ENCODE measurements at regions of chr11 and their contacts with region 1.

Region 1: DNA sequence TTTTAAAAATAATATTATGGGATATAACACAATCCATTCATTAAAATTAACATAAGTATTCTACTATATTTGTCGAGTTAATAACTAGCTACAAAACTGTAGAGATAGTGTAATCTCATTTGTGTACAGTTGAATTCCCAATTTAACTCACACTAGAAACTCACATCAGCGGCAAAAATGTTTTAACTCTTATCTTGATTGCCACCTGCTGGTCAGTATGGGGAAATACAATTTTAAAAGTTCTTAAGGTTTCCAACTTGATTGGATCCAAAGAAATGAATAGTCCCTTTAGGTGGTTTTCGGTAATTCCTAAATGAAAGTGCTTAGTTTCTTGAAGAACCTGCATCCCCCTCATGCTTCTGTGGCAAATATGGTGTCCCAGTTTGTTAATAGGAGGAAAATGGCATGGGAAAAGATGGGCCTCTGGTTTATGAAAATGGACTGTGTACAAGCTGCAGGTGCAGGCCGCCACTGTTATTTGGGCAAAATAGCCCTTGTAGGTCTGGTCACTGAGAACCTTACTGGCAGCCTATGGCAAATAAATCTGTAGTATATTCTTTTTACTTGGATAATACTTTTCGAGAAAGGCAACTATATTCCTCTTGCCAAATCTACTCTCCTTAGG is 33.7 kb upstream of the SLC17A6 start:
- DNase-seq: no peak
- ATAC-seq: peak in 3 of 4 donors; percentile 30 to 67 (median 36)
- H3K4me3 ChIP-seq: no peak overlapping the region
- H3K27ac ChIP-seq: no peak overlapping the region
- H3K4me1 ChIP-seq: no peaks in the 10 kb centered on the region
- H3K27me3 ChIP-seq: peaks cover 0 to 3% (median 0%) of the 10 kb centered on the region in 3 donors
- CTCF ChIP-seq: peak; percentile 61

Region 2: GRCh38 chr11:20647976-20648565 is 1656.4 kb before region 1 on chr11:
- intact Hi-C with region 1: loop called (anchors 5 to 10 kb)
- DNase-seq: no peak
- ATAC-seq: peak in 3 of 4 donors; percentile 51 to 67 (median 57)
- H3K4me3 ChIP-seq: no peak overlapping the region
- H3K27ac ChIP-seq: no peak overlapping the region
- H3K4me1 ChIP-seq: no peaks in the 10 kb centered on the region
- H3K27me3 ChIP-seq: peaks cover 0 to 3% (median 2%) of the 10 kb centered on the region in 3 donors
- CTCF ChIP-seq: peak; percentile 86

Measured in psoas muscle (tissue), 8 donors.